Left cardiac atrium (tissue), 4 donors: ENCODE measurements at regions of chr17 and their contacts with region 1.

Region 1: DNA sequence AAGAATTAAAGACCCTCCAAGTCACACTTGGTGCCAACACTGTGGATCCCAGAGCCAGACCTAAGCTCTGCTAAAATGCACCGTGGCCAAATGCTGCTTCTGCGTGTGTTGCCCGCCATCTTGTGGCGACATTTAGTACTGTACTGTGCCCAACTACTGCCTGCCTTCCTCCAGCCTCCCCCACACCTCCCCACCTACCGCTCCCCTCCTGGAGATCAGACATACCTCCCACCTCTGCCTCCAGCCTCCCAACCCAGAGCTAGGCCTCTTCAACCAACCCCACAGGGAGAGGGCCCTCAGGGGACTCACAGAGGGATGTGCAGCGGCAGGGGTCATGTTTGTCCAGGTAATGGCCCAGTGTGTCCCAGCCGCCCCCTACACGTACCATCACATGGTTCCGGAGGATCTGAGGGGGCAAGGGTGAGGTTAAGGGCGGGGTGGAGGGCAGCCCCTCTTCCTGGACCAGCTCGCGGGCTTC is 5.5 kb downstream of the GAS2L2 start:
- DNase-seq: peak; percentile 81
- ATAC-seq: peak; percentile 77 to 84

Region 2: DNA sequence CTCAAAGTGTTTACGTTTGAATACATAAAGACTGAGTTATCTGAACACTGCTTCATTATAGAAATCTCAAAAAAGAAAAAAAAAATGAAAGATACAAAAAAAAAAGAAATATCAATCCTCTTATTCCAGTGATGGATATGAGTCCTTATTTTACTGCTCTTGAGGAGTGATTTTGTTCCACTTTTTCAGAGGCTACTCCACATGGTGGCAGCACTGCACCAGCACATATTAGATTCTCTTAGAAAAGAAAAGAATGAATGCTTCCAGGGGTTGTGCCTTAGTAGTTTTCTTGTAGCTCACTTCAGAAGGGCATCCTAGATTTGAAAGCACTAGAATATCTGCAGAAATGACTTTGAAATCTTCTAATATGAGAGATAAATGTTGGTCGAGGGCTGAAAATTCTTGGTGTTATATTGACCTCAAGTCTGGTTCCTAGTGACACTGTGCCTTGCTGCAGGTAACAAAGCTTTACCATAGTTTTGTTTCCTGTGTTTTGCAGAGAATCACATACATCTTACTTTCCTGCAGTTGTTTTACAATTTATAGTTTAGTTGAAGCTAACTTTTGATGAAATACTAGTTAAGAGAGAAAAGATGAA is 134.6 kb before region 1 on chr17:
- intact Hi-C with region 1: loop called (anchors 2 to 5 kb)
- DNase-seq: peak; percentile 44
- ATAC-seq: peak in 1 of 2 donors; percentile 38

Region 3: DNA sequence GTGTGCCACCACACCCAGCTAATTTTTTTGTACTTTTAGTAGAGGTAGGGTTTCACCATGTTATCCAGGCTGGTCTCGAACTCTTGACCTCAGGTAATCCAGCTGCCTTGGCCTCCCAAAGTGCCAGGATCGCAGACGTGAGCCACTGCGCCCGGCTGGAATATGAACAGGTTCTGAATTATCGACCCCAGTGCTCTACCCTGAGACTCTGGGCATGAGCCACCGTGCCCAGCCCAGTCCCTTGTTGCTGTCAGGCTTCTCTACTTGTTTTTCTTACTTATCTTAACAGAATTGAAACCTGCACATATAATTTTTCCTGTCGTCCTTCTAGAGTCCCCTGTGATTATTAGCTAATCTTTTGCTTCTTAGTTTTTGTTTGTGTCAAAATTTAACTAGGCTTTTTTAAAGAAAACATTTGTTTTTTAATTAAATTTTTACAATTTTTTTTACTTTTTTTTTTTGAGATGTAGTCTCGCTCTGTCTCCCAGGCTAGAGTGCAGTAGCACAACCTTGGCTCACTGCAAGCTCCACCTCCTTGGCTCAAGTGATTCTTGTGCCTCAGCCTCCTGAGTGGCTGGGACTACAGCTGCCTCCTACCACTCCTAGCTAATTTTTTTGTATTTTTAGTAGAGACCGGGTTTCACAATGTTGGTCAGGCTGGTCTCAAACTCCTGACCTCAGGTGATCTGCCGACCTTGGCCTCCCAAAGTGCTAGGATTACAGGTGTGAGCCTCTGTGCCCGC is 93.8 kb before region 1 on chr17:
- intact Hi-C with region 1: loop called in 1 of 2 experiments (anchors 10 kb)
- DNase-seq: no peak
- ATAC-seq: no peak

Region 4: DNA sequence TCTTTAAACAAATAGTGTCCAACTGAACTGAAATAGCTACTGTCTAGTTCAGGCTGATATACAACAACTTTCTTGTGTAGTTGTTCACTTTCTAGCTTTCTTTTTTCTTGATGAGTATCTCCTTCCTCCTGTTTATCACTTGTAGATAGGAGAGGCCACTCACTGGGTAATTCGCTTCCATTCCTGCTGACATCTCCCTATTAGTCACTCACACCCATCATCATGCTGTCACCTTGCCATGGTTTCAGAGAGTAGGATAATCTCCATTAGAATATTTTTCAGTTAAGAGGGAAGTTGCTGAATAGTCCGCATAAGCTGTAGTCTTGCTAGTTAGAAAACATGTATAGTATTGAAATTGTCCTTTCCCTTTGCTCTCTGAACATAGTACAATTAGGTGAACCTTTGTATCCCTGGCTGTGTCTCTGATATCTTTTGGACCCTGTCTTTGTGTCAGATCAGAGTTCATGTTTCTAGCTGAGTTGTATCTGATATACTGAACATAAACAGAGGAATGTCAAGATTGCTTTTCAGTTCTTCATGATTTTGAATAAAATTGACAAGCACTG is 80.5 kb before region 1 on chr17:
- intact Hi-C with region 1: loop called in 1 of 2 experiments (anchors 2 kb)
- DNase-seq: no peak
- ATAC-seq: peak in 1 of 2 donors; percentile 72